Heart right ventricle (tissue), 16 donors: ENCODE measurements at regions of chr2 and their contacts with region 1.

Region 1: GRCh38 chr2:109213646-109214417 is 84.8 kb downstream of the SH3RF3 start:
- DNase-seq: no peak
- ATAC-seq: peak in 7 of 8 donors; percentile 25 to 74 (median 39)
- H3K4me3 ChIP-seq: peak overlapping the region in 1 of 10 donors; percentile 4
- H3K27ac ChIP-seq: peak overlapping the region in 1 of 10 donors; percentile 54
- H3K4me1 ChIP-seq: peaks cover 7 to 78% (median 53%) of the 10 kb centered on the region in 9 donors
- H3K27me3 ChIP-seq: peaks cover 0 to 19% (median 0%) of the 10 kb centered on the region in 7 donors
- CTCF ChIP-seq: no peak

Region 2: DNA sequence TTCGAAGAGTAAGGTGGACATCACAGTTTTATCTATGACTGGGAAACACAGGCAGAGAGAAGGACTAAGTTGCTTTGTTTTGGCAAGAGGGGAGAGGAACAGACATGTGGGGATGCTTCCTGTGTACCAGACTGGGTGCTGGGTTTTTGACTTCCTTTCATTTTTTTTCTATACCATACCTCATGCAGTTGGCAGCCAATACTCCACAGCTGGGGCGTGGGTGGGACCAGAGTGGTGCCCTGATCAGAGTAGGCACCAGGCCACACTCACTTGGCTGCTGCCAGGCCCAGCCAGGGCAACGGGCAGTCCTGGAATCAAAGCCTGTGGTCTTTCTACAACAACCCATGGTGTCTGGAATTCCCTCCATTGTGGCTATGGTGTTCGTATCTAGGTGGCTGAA is 39.6 kb before region 1 on chr2:
- intact Hi-C with region 1: no loop called
- DNase-seq: no peak
- ATAC-seq: peak in 1 of 8 donors; percentile 18
- H3K4me3 ChIP-seq: no peak overlapping the region
- H3K27ac ChIP-seq: peak overlapping the region; percentile 71 to 87 (median 80)
- H3K4me1 ChIP-seq: peaks cover 12 to 72% (median 54%) of the 10 kb centered on the region in 9 donors
- H3K27me3 ChIP-seq: no peaks in the 10 kb centered on the region
- CTCF ChIP-seq: no peak

Region 3: GRCh38 chr2:109195193-109196045 is 18.4 kb before region 1 on chr2:
- intact Hi-C with region 1: loop called in 1 of 10 experiments (anchors 1 kb)
- DNase-seq: peak; percentile 54 to 58
- ATAC-seq: peak; percentile 59 to 89 (median 80)
- H3K4me3 ChIP-seq: peak overlapping the region in 1 of 10 donors; percentile 4
- H3K27ac ChIP-seq: peak overlapping the region; percentile 30 to 81 (median 68)
- H3K4me1 ChIP-seq: peaks cover 19 to 63% (median 30%) of the 10 kb centered on the region in 9 donors
- H3K27me3 ChIP-seq: no peaks in the 10 kb centered on the region
- CTCF ChIP-seq: no peak

Region 4: DNA sequence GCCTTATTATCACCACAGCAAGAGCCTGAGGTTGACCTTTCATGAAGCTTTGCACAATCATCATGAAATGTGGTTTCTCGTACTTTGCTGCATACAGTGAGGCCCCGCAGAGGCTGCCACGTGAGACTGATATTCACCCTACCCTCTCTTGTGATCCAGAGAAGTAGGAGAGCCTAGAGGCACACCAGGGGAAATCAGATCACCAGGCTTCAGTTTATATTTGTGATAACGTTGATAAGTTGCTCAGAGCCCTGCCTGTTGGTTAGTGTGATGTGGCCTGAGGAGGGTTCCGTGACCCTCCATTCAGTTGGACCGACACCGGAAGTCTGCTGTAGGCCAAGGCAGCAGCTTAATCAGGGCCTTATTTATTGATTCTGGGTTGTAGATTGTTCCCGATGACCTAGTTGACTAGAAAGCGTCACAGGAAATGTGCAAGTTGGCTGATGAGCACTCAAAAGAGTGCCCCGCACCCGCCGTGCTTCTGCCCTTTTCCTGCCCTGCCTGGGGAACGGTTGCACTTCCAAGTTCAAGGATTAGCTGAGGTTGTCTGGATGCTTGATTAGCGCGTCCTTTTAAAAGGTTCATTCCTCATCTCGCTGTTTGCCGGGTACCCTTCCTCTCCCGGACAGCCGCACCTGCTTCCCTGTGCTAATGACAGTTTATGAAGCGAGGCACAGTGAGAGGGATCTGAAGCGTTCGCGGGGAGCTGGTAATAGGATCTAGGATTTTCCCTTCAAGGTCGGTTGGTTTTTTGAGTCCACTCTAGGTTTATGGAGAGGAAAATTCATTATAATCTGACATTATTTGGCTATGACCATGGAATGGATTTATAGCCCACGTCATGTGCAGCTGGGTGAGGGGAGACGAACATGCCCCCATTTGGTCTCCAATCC is 61.5 kb after region 1 on chr2:
- intact Hi-C with region 1: loop called in 1 of 10 experiments (anchors 10 kb)
- DNase-seq: no peak
- ATAC-seq: peak in 3 of 8 donors; percentile 6 to 18 (median 9)
- H3K4me3 ChIP-seq: no peak overlapping the region
- H3K27ac ChIP-seq: no peak overlapping the region
- H3K4me1 ChIP-seq: peaks cover 2 to 33% (median 22%) of the 10 kb centered on the region in 9 donors
- H3K27me3 ChIP-seq: no peaks in the 10 kb centered on the region
- CTCF ChIP-seq: no peak